ENCODE measurements at regions of chr4 and their contacts with region 1.

Region 1: DNA sequence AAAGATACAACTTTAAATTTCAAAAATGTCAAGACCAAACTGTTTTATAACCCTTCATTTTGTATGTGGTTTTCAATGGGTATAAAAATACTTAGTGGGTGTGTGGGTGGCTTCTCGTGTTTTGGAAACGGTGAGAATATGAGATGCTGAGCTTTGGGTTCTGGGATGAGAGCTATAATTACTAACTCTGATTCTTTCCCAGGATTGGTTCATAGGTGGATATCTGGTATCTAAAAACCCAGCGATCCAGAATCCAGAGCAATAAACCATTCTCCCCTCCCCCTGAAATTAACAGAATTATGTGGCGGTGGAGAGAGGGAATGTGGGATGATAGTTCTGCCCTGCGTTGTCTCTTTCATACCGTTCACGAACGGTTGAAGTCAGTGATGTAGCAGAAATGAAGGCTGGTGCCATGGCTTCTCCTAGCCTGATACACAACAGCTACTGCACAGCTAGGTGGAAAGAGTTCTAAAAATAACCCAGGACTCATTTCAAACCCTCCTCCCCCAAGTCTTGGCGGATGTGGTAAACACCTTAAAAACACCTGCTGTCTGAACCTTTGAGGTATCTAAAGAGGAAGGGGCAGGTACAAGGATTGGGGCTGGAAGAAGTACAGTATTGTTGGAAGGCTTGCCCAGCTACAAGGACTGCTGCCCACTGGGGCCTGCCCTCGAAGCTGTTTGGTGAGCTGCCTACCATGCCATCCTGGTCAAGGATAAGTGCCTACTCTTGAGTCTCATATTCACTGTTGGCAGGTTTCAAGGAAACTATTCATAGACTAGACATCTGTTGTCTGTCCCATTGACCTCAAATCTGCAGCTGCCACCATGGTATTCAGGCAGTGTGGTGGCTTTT is 44.5 kb downstream of the SEPTIN11 start:
- DNase-seq: peak; percentile 14 to 87 (median 65)
- ATAC-seq: peak; percentile 76
- H3K4me3 Mint-ChIP-seq: peak overlapping the region; percentile 69 to 89 (median 80)
- H3K27ac Mint-ChIP-seq: peak overlapping the region; percentile 76 to 94 (median 91)
- H3K4me1 Mint-ChIP-seq: peaks cover 32 to 75% (median 67%) of the 10 kb centered on the region in 4 donors
- H3K27me3 Mint-ChIP-seq: no peaks in the 10 kb centered on the region

Region 2: GRCh38 chr4:76892621-76893020 is 101.4 kb before region 1 on chr4:
- POLR2A ChIA-PET with region 1: no interaction called
- DNase-seq: no peak
- ATAC-seq: no peak
- H3K4me3 Mint-ChIP-seq: no peak overlapping the region
- H3K27ac Mint-ChIP-seq: no peak overlapping the region
- H3K4me1 Mint-ChIP-seq: no peaks in the 10 kb centered on the region
- H3K27me3 Mint-ChIP-seq: peaks cover 12 to 28% (median 21%) of the 10 kb centered on the region in 5 donors

Region 3: DNA sequence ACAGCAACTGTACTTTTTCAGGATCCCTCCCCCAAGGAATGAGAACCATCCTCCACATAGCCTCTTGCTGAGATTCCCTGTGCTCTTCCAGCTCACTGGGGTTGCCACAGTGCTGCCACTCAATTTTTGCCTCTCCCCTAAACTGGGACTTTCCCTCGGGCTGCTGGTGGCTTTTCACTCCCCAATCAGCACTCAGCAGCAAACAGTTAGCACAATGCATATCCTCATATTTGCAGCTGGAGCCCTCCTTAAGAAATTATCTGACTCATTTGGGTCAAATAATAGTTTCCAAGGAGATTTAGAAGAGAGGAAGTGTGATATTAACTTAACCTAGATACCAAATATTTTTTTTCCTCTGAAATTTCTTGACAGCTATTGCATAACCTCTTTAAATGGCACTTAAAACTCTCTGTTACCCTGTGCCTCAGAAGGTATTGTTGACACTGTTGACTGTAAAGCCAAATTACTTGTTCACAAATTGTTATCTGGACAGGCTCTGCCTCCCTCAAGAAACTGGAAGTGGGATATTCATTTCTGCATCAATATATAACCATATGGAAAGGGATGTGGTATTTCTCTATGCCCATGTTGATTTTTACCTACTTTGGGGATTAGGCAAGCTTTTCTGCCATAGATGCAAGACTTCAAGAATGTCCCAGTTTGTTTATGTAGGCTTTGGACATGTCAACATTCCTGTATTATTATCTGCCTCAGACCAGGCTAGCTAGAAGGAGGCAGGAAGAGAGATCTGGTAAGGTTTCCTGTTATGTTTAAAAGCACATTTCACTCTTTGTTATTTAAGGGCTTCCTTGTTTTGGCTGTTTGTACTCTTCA is 13.6 kb after region 1 on chr4:
- POLR2A ChIA-PET with region 1: interaction called, 49 read pairs
- DNase-seq: peak in 4 of 10 donors; percentile 16 to 31 (median 20)
- ATAC-seq: peak; percentile 92 to 95
- H3K4me3 Mint-ChIP-seq: peak overlapping the region; percentile 8 to 78 (median 63)
- H3K27ac Mint-ChIP-seq: peak overlapping the region; percentile 66 to 94 (median 88)
- H3K4me1 Mint-ChIP-seq: peaks cover 48 to 66% (median 62%) of the 10 kb centered on the region in 4 donors
- H3K27me3 Mint-ChIP-seq: no peaks in the 10 kb centered on the region

Region 4: GRCh38 chr4:77037736-77038135 is 43.7 kb after region 1 on chr4:
- POLR2A ChIA-PET with region 1: no interaction called
- DNase-seq: no peak
- ATAC-seq: no peak
- H3K4me3 Mint-ChIP-seq: no peak overlapping the region
- H3K27ac Mint-ChIP-seq: no peak overlapping the region
- H3K4me1 Mint-ChIP-seq: peaks cover 0 to 20% (median 0%) of the 10 kb centered on the region in 4 donors
- H3K27me3 Mint-ChIP-seq: no peaks in the 10 kb centered on the region